Activated CD4-positive, alpha-beta memory T cell treated with anti-CD3 and anti-CD28 coated beads, Interleukin-2, amount 10 ng/mL, durations not matched to agents 7 days and 5 days (primary cell): ENCODE measurements at regions of chr10 and their contacts with region 1.

Region 1: DNA sequence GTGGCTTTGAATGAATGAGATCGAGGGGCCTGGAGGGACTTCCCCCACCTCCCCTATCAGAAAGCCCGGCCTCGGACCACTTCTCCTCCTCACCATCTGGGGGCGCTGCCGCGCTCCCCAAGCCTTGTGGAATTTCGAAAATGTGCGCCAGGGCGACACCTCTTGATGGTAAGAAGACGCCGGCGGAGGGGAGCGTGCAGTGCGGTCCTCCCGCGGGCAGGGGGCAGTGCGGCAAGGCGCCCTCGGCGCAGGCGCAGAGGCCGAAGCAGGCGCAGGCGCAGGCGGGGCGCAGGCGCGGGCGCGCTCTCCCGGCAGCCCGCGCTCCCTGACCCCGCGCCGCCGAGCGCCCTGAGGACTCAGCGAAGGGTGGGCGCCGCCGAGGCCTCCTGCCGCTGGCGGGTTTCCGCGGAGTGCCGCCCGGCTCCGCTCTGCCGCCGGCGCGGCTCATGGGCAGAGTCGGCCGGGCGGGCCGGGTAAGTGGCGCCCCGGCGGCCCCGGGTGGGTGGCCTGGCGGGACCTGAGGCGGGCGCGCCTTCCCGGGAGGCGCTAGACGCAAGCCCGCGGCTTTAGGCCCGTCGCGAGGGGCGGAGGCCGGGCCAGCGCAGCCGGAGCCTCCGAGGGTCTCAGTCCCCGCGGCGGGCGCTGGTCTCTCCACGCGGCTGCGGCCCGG is at the start of gene RBM17:
- DNase-seq: peak; percentile 98
- H3K4me3 Mint-ChIP-seq: peak within 1 kb of the TSS; percentile 96
- H3K27ac Mint-ChIP-seq: peak within 1 kb of the TSS; percentile 54
- H3K4me1 Mint-ChIP-seq: peaks cover 71% of the 10 kb centered on the region
- H3K27me3 Mint-ChIP-seq: no peaks in the 10 kb centered on the region
- total RNA-seq, gene RBM17: 155 to 157 TPM

Region 2: DNA sequence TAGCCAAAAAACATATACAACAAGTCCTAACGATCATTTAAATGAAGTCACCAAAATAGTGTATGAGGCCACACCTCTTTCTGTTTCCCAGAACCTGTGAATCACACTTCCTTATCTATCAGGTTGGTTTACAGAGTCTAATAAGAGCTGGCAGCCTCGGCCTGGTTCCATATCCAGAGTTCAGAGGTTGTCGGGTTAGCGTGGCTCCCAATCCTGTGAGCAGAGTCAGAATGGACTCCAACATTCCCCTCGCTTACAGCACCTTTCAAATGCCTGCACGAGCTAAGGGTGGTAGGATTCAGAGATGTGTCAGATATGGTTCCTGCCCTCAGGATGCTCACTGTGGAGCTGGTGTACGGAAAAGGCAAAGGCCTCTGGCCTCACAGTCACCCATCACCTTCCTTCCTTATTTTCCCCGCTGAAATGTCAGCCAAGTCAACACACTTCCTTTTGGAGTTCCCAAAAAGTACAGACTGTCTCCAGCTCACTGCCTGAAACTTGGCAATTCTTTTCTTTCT is 117.5 kb before region 1 on chr10:
- CTCF ChIA-PET with region 1: interaction called, 15 read pairs
- POLR2A ChIA-PET with region 1: interaction called, 8 read pairs
- DNase-seq: peak; percentile 62
- H3K4me3 Mint-ChIP-seq: peak overlapping the region; percentile 60
- H3K27ac Mint-ChIP-seq: peak overlapping the region; percentile 84
- H3K4me1 Mint-ChIP-seq: peaks cover 59% of the 10 kb centered on the region
- H3K27me3 Mint-ChIP-seq: no peaks in the 10 kb centered on the region

Region 3: DNA sequence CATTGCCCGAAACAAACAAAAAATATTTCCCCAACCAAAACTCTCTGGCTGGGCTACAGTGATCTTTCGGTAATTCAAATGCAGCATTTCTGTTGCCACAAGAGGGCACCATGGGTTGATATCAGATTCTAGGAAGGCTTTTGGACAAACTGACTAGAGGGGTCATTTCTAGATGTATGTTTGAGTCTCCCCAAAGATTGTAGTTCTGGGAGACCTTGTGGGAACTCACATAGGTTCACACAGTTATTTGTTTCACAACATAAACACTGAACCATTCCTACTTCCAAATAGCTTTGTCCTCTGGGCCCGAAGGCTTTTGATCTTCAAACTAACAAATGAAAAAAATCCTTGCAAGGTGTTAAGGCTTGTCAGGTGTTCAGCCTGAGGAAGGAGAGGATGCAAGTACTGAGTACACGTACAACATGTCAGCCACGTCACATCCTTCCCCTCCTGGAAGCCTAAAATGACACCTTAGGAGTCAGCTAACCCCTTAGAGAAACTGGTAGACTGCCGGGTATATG is 74.6 kb before region 1 on chr10:
- CTCF ChIA-PET with region 1: interaction called, 28 read pairs
- POLR2A ChIA-PET with region 1: interaction called, 9 read pairs
- DNase-seq: peak; percentile 60
- H3K4me3 Mint-ChIP-seq: no peak overlapping the region
- H3K27ac Mint-ChIP-seq: peak overlapping the region; percentile 90
- H3K4me1 Mint-ChIP-seq: peaks cover 61% of the 10 kb centered on the region
- H3K27me3 Mint-ChIP-seq: no peaks in the 10 kb centered on the region

Region 4: DNA sequence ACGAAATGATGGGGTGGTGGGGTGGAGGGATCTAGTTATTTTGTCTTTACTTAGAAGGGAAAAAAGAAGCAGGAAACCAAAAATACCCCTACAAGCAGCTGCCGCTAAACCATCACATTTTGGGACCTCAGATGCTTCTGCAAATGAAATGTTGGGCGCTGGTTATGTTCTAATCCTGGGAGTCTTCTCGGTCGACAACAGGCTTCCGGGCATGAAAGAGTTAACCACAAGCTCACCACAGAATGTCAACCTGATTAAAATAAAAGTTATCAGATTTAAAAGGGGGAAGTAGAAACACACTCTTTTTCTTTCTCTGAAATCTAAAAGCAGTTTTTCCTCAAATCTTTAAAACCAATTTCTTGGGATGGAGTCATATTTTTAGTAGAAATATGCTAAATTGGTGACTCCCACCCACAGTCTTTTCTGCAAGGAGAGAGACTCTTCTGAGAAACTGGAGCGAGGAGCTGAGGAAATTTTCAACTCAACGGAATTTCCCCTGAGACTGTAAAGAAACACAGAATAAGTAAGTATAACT is 43.5 kb before region 1 on chr10:
- CTCF ChIA-PET with region 1: interaction called, 28 read pairs
- POLR2A ChIA-PET with region 1: interaction called, 73 read pairs
- DNase-seq: no peak
- H3K4me3 Mint-ChIP-seq: peak overlapping the region; percentile 58
- H3K27ac Mint-ChIP-seq: peak overlapping the region; percentile 85
- H3K4me1 Mint-ChIP-seq: peaks cover 88% of the 10 kb centered on the region
- H3K27me3 Mint-ChIP-seq: no peaks in the 10 kb centered on the region

Region 5: GRCh38 chr10:6062101-6062771 is 26.6 kb before region 1 on chr10 and contains the start of gene IL2RA:
- CTCF ChIA-PET with region 1: interaction called, 138 read pairs
- POLR2A ChIA-PET with region 1: interaction called, 168 read pairs
- DNase-seq: peak; percentile 77
- H3K4me3 Mint-ChIP-seq: peak within 1 kb of the TSS; percentile 90
- H3K27ac Mint-ChIP-seq: peak within 1 kb of the TSS; percentile 90
- H3K4me1 Mint-ChIP-seq: peaks cover 71% of the 10 kb centered on the region
- H3K27me3 Mint-ChIP-seq: no peaks in the 10 kb centered on the region
- total RNA-seq, gene IL2RA: 437 to 446 TPM

Region 6: GRCh38 chr10:6077071-6077675 is 11.7 kb before region 1 on chr10:
- CTCF ChIA-PET with region 1: interaction called, 138 read pairs
- POLR2A ChIA-PET with region 1: interaction called, 168 read pairs
- DNase-seq: no peak
- H3K4me3 Mint-ChIP-seq: no peak overlapping the region
- H3K27ac Mint-ChIP-seq: no peak overlapping the region
- H3K4me1 Mint-ChIP-seq: peaks cover 68% of the 10 kb centered on the region
- H3K27me3 Mint-ChIP-seq: no peaks in the 10 kb centered on the region

Region 7: DNA sequence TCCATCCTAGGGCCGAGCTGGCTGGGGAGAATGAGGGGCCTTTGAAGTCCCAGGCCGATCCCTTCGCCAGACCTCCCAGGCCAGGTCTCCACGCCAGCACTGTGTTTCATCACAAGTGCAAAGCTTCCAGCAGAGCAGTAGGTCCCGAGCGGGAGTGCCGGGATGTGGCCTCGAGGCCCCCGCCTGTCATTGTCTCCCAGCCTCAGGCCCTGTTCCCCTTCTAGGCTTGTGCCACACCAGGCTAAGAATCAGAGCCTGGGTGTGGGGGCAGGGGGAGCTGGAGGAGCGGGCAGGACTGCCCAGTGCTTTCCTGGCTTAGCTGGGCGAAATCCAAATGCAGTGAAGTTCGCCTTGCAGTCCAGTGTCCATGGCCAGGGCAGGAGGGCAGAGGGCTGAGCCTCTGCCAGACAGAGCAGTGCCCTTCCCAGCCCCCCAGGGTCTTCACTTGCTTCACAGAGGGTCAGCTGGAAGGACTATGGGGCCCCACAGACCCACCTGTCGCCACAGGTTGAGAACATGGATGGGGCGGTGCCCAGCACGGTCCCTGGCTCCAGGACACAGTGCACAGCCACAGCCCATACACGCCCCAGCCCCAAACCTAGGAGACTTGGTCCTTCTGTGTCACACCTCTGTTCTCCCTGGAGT is 93.7 kb after region 1 on chr10:
- CTCF ChIA-PET with region 1: no interaction called
- POLR2A ChIA-PET with region 1: no interaction called
- DNase-seq: no peak
- H3K4me3 Mint-ChIP-seq: no peak overlapping the region
- H3K27ac Mint-ChIP-seq: no peak overlapping the region
- H3K4me1 Mint-ChIP-seq: peaks cover 25% of the 10 kb centered on the region
- H3K27me3 Mint-ChIP-seq: no peaks in the 10 kb centered on the region